ENCODE measurements at regions of chr9 and their contacts with region 1.

Region 1: DNA sequence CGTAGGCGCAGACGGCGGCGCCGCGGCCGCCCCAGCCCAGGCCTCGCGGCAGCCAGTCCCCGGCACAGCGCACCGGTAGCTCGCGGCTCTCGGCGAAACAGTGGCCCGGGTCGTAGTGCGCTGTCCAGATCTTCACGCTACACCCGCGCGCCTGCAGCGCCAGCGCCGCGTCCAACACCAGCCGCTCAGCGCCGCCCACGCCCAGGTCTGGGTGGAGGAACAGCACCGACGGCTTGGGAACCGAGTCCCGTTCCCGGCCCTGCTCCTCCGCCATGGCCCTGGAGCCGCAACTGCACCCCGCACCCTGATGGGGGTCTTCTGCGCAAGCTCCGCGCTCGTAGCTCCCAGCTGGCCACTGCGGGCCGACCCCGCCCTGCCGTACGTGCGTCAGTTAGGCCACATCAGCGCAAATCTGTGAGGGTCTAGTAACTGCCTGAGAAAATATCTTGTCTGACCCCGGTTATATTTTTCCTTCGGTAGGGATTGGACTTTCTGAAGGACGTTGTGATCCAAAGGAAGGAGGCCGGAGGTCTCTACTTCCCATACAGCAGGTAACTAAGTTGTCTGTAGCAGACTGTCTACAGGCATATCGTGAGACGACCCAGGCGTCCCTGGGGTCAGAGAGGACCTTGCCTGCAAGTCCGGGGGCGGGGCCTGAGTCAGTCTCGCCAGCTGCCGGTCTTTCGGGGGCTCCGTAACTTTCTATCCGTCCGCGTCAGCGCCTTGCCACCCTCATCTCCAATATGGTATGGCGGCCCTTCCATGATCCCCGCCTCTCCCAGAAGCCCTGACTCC is at the starts of genes ALG2 and SEC61B:
- DNase-seq: peak; percentile 94
- ATAC-seq: peak; percentile 91
- H3K4me3 ChIP-seq: peak within 1 kb of the TSS; percentile 97
- H3K27ac ChIP-seq: peak within 1 kb of the TSS; percentile 99
- H3K4me1 ChIP-seq: peaks cover 9% of the 10 kb centered on the region
- H3K27me3 ChIP-seq: no peaks in the 10 kb centered on the region
- CTCF ChIP-seq: no peak
- EP300 ChIP-seq: peak in 1 of 2 experiments; percentile 51; a peak in 1 of 4 replicates
- POLR2A ChIP-seq: peak; percentile 97
- RAD21 ChIP-seq: no peak
- polyA plus RNA-seq, gene ALG2: 8.8 to 17.8 TPM
- polyA plus RNA-seq, gene SEC61B: 108 to 229 TPM

Region 2: GRCh38 chr9:99076483-99077171 is 145.2 kb before region 1 on chr9:
- CTCF ChIA-PET with region 1: no interaction called
- POLR2A ChIA-PET with region 1: no interaction called
- RAD21 ChIA-PET with region 1: no interaction called
- SMC1A ChIA-PET with region 1: no interaction called
- in situ Hi-C with region 1: no loop called
- intact Hi-C with region 1: no loop called
- DNase-seq: no peak
- ATAC-seq: peak; percentile 44; the same call in 2 of the 3 replicates
- H3K4me3 ChIP-seq: no peak overlapping the region
- H3K27ac ChIP-seq: no peak overlapping the region
- H3K4me1 ChIP-seq: peaks cover 6% of the 10 kb centered on the region; the same call in 1 of the 2 replicates
- H3K27me3 ChIP-seq: no peaks in the 10 kb centered on the region
- CTCF ChIP-seq: no peak
- EP300 ChIP-seq: no peak
- POLR2A ChIP-seq: no peak
- RAD21 ChIP-seq: no peak

Region 3: DNA sequence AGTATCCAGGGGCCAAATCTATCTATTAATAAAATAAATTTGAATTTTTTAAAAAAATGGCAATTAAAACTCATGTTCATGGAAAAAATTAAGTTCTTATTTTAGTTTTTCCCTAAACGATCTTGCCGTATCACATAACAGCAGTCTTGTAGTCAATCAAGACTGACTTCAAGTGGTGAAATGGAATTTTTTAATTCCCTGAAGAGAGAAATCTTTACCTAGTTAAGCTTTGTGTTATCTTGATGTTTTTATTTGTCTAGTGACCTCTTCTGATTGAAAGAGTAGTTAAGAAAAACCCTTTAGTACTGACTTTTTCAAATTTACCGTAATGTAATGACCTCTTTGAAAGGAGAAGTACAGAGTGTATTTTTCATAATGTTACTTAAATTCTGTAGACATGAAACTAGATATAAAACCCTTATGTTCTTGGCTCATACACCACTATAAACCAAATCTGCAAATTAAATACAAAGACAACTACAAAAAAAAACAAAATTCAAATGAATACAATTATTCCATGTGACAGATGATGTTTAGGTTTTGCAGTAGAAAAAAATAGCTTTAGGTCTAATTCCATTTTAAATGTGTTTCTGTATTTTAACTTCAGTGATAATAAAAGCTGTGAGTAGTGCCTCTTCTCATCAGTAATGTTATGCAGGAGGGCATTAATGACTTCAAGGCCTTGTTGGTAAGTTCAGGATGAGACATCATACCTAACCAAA is 97.1 kb before region 1 on chr9:
- CTCF ChIA-PET with region 1: no interaction called
- POLR2A ChIA-PET with region 1: no interaction called
- RAD21 ChIA-PET with region 1: no interaction called
- SMC1A ChIA-PET with region 1: no interaction called
- in situ Hi-C with region 1: no loop called
- intact Hi-C with region 1: no loop called
- DNase-seq: no peak
- ATAC-seq: no peak
- H3K4me3 ChIP-seq: no peak overlapping the region
- H3K27ac ChIP-seq: no peak overlapping the region
- H3K4me1 ChIP-seq: peaks cover 36% of the 10 kb centered on the region
- H3K27me3 ChIP-seq: no peaks in the 10 kb centered on the region
- CTCF ChIP-seq: no peak
- EP300 ChIP-seq: no peak
- POLR2A ChIP-seq: no peak
- RAD21 ChIP-seq: no peak

Region 4: DNA sequence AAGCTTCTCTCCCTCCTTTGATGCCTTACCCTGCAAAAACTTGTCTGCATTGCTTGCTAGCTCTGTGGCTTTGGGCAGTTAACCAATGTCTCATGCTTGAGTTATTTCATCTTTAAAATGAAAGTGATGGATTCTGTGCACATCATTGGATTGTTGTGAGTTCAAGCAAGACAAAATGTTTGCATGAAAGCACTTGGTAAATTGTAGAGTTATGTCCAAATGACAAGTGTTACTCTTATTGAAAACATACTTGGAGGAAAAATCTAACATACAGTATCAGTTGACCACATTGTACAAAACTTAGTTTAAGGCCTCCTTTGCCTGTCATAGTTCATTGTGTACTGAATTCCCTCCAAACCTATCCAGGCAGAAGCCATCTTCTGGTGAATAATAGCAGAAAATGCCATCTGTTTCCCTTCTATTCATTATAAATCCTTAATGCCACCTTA is 86.9 kb before region 1 on chr9:
- CTCF ChIA-PET with region 1: no interaction called
- POLR2A ChIA-PET with region 1: no interaction called
- RAD21 ChIA-PET with region 1: no interaction called
- SMC1A ChIA-PET with region 1: no interaction called
- in situ Hi-C with region 1: no loop called
- intact Hi-C with region 1: no loop called
- DNase-seq: peak; percentile 36
- ATAC-seq: peak; percentile 46
- H3K4me3 ChIP-seq: no peak overlapping the region
- H3K27ac ChIP-seq: no peak overlapping the region
- H3K4me1 ChIP-seq: peaks cover 22% of the 10 kb centered on the region
- H3K27me3 ChIP-seq: no peaks in the 10 kb centered on the region
- CTCF ChIP-seq: no peak
- EP300 ChIP-seq: no peak
- POLR2A ChIP-seq: no peak
- RAD21 ChIP-seq: no peak

Region 5: GRCh38 chr9:99154356-99154755 is 67.5 kb before region 1 on chr9:
- CTCF ChIA-PET with region 1: no interaction called
- POLR2A ChIA-PET with region 1: no interaction called
- RAD21 ChIA-PET with region 1: no interaction called
- SMC1A ChIA-PET with region 1: no interaction called
- in situ Hi-C with region 1: no loop called
- intact Hi-C with region 1: no loop called
- DNase-seq: no peak
- ATAC-seq: no peak
- H3K4me3 ChIP-seq: no peak overlapping the region
- H3K27ac ChIP-seq: no peak overlapping the region
- H3K4me1 ChIP-seq: no peaks in the 10 kb centered on the region
- H3K27me3 ChIP-seq: no peaks in the 10 kb centered on the region
- CTCF ChIP-seq: no peak
- EP300 ChIP-seq: no peak
- POLR2A ChIP-seq: no peak
- RAD21 ChIP-seq: no peak

Region 6: DNA sequence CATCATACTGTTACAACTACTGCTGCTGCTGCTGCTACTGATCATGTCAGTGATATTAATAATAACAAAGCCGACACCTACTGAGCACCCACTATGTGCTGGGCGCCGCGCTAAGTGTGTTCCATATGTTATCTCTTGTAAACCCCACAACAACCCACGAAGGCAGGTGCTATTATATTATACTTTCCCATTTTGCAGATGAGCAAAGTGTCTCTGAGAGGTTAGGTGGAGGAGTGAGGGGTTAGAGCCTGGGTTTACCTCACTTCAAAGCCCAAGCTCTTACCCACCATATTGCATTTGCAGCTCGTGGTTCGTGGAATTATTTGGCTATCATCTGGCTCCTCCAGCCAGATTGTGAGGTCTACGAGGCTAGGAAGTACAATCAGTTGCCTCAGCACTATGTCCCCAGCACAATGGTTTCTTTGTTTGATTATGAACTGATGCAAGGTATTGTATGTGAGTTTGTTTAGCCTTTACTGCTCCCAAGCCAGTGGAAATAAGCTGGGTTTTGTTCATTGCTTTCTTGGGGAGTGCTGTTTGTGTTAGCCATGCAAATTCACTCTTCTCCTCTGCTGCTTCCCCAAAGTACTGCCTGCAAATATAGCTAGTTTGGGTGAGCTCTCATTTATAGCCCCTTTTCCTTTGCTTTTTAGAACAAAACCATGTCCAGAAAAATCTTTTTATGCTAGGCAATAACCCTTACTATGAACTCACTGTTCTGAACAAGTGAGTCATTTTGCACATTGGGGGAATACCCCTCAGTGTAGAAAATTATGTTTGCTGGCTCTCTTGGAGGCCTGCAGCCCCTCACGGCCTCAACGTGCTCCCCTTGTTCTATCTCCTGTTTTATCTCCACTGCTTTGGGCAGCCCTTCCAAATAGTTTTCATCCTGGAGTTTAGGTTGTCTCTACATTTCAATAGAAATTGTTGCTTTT is 48.0 kb before region 1 on chr9:
- CTCF ChIA-PET with region 1: interaction called, 5 read pairs
- POLR2A ChIA-PET with region 1: interaction called, 10 read pairs
- RAD21 ChIA-PET with region 1: interaction called, 6 read pairs
- SMC1A ChIA-PET with region 1: interaction called, 4 read pairs
- in situ Hi-C with region 1: no loop called
- intact Hi-C with region 1: no loop called
- DNase-seq: no peak
- ATAC-seq: peak; percentile 81
- H3K4me3 ChIP-seq: no peak overlapping the region
- H3K27ac ChIP-seq: no peak overlapping the region
- H3K4me1 ChIP-seq: peaks cover 8% of the 10 kb centered on the region
- H3K27me3 ChIP-seq: no peaks in the 10 kb centered on the region
- CTCF ChIP-seq: no peak
- EP300 ChIP-seq: no peak
- POLR2A ChIP-seq: no peak
- RAD21 ChIP-seq: no peak

Region 7: DNA sequence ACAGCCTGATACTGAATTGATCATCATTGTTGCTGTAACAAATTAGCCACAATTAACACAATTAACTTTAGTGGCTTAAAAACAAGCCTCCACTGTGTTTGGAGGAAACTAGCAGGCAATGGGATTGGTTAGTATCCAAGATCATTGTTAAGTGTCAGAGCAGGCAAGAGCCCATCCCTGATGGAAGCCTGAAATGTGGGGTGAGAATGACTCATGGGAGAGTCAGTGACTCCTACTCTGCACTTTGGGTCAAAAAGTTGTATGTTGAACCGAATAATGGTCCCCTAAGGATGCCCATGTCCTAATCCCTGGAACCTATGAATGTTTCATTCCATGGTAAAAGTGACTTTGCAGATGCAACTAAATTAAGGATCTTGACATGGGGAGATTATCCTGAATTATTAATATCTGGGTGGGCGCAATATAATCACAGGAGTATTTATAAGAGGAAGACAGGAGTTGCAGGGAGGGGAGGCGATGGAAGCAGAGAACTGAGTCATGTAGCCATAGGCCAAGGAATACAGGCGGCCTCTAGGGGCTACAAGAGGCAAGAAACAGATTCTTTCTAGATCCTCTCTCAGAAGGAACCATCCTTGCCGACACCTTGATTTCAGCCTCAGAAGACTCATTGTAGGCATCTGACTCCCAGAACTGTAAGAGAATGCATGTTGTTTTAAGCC is 28.9 kb before region 1 on chr9:
- CTCF ChIA-PET with region 1: interaction called, 8 read pairs
- POLR2A ChIA-PET with region 1: interaction called, 31 read pairs
- RAD21 ChIA-PET with region 1: interaction called, 121 read pairs
- SMC1A ChIA-PET with region 1: interaction called, 189 read pairs
- in situ Hi-C with region 1: no loop called
- intact Hi-C with region 1: no loop called
- DNase-seq: no peak
- ATAC-seq: no peak
- H3K4me3 ChIP-seq: no peak overlapping the region
- H3K27ac ChIP-seq: no peak overlapping the region
- H3K4me1 ChIP-seq: peaks cover 23% of the 10 kb centered on the region
- H3K27me3 ChIP-seq: no peaks in the 10 kb centered on the region
- CTCF ChIP-seq: peak in 1 of 3 experiments; percentile 6; a peak in 1 of 6 replicates
- EP300 ChIP-seq: no peak
- POLR2A ChIP-seq: no peak
- RAD21 ChIP-seq: no peak

Region 8: DNA sequence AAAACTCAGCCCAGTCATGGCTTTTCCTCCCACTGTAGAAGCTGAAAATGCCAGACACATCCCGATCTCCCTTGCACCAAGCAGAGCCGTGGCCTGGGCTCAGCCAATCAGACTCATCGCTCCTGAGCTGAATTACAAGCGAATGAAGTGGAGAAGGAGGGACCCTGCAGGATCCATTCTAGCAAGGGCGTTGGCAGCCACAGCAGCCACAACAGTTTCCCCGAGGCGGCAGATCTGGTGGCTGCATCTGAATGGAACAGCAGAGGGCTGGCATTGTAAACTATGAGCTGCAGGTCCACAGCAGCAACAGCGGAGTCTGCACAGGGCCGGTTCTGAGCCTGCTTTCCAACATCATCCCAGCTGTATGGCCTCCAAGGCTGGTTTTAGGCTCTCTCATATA is 23.8 kb before region 1 on chr9:
- CTCF ChIA-PET with region 1: interaction called, 9 read pairs
- POLR2A ChIA-PET with region 1: interaction called, 20 read pairs
- RAD21 ChIA-PET with region 1: interaction called, 12 read pairs
- SMC1A ChIA-PET with region 1: interaction called, 39 read pairs
- in situ Hi-C with region 1: no loop called
- intact Hi-C with region 1: loop called (anchors 2 kb)
- DNase-seq: no peak
- ATAC-seq: no peak
- H3K4me3 ChIP-seq: no peak overlapping the region
- H3K27ac ChIP-seq: no peak overlapping the region
- H3K4me1 ChIP-seq: peaks cover 34% of the 10 kb centered on the region
- H3K27me3 ChIP-seq: no peaks in the 10 kb centered on the region
- CTCF ChIP-seq: no peak
- EP300 ChIP-seq: no peak
- POLR2A ChIP-seq: no peak
- RAD21 ChIP-seq: no peak

Region 9: GRCh38 chr9:99244344-99245260 is 22.8 kb after region 1 on chr9:
- CTCF ChIA-PET with region 1: interaction called, 4 read pairs
- POLR2A ChIA-PET with region 1: interaction called, 11 read pairs
- RAD21 ChIA-PET with region 1: interaction called, 5 read pairs
- SMC1A ChIA-PET with region 1: interaction called, 8 read pairs
- in situ Hi-C with region 1: no loop called
- intact Hi-C with region 1: no loop called
- DNase-seq: peak; percentile 68
- ATAC-seq: peak; percentile 96
- H3K4me3 ChIP-seq: no peak overlapping the region
- H3K27ac ChIP-seq: peak overlapping the region; percentile 94
- H3K4me1 ChIP-seq: peaks cover 31% of the 10 kb centered on the region
- H3K27me3 ChIP-seq: no peaks in the 10 kb centered on the region
- CTCF ChIP-seq: no peak
- EP300 ChIP-seq: peak; percentile 84 to 96
- POLR2A ChIP-seq: no peak
- RAD21 ChIP-seq: no peak

Measured in GM12878 (cell line).